A549 (cell line): ENCODE measurements at regions of chr7 and their contacts with region 1.

Region 1: DNA sequence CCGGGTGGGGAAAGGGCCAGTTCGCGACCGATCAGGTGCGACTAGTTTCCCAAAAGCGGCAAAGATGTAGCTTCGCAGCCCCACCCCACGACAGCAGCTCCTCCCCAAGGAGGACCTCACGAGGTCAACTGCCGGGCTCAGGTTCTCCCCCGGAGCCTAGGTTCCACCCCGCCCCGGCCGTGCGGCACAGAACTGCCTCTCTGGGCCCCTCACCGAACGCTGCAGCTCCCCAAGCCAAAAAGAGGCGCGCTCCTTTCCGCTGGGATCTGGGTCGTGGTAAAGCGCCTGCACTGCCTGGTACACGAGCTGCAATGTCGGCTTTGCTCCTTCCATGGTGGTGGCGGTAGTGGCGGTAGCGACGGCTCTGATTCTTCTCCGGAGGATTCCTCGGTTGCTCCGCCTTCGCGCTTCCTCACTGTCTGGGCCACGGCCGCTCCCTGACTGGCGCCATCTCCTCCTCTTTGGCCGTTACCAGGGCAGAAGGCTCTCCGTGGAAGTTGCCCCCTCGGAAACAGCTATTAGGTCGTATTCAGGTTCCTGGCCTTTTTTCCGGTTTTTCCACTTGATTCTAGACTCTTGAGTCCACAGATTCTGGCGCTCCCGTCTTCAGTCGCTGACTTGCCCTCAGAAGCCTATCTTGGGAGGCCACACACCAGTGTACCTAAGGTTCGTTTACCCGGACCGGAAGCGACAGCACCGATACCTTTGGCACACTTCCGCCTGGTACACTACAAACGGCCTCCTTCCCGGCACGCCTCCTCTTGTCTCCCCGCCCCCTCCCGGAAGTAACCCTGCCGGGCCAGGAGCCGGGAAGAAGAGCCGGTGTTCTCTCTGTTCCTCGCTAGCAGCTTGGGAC is at the start of gene TNPO3:
- DNase-seq: peak; percentile 96 to 98
- ATAC-seq: peak; percentile 93 to 95
- H3K4me3 ChIP-seq: peak within 1 kb of the TSS; percentile 85
- H3K27ac ChIP-seq: peak within 1 kb of the TSS; percentile 92 to 95
- H3K4me1 ChIP-seq: peaks cover 17% of the 10 kb centered on the region
- CTCF ChIP-seq: no peak
- EP300 ChIP-seq: no peak
- POLR2A ChIP-seq: peak; percentile 93
- RAD21 ChIP-seq: no peak
- polyA plus RNA-seq, gene TNPO3: 66.9 and 72.9 TPM in 2 replicates

Region 2: GRCh38 chr7:129066290-129067131 is 11.8 kb after region 1 on chr7:
- CTCF ChIA-PET with region 1: no interaction called
- POLR2A ChIA-PET with region 1: interaction called, 25 read pairs
- DNase-seq: peak; percentile 26 to 43
- ATAC-seq: peak; percentile 83 to 85
- H3K4me3 ChIP-seq: no peak overlapping the region
- H3K27ac ChIP-seq: peak overlapping the region; percentile 3 to 67; a peak in 4 of 6 replicates
- H3K4me1 ChIP-seq: peaks cover 14% of the 10 kb centered on the region
- CTCF ChIP-seq: no peak
- EP300 ChIP-seq: no peak
- POLR2A ChIP-seq: no peak
- RAD21 ChIP-seq: no peak

Region 3: DNA sequence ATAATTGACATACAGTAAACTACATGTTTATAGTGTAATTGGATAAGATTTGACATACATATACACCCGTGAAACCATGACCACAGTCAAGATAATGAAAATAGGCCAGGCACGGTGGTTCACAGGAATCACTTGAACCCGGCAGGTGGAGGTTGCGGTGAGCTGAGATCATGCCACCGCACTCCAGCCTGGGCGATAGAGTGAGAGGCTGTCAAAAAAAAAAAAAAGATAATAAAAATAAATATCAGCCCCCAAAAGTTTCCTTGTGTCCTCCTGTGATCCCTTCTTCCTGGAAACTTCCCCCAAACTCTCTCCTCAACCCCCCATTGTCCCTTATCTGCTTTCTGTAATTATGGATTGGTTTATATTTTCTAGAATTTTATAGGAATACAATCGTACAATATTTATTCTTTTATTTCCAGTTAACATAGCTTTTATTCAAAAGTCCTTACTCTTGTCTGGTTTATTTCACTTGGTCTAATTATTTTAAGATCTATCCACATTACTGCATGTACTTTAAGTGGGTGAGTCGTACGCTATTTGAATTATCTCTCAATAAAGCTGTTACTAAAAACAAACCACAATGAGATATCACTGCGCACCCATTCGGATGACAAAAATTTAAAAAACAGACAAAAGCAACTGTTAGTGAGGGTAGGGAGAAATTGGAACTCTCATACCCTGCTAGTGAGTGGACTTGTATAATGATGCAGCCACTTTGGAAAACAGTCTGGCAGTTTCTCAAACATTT is 30.3 kb after region 1 on chr7:
- CTCF ChIA-PET with region 1: no interaction called
- POLR2A ChIA-PET with region 1: no interaction called
- DNase-seq: no peak
- ATAC-seq: no peak
- H3K4me3 ChIP-seq: no peak overlapping the region
- H3K27ac ChIP-seq: no peak overlapping the region
- H3K4me1 ChIP-seq: no peaks in the 10 kb centered on the region
- CTCF ChIP-seq: no peak
- EP300 ChIP-seq: no peak
- POLR2A ChIP-seq: no peak
- RAD21 ChIP-seq: no peak